ENCODE measurements at regions of chr2 and their contacts with region 1.

Region 1: DNA sequence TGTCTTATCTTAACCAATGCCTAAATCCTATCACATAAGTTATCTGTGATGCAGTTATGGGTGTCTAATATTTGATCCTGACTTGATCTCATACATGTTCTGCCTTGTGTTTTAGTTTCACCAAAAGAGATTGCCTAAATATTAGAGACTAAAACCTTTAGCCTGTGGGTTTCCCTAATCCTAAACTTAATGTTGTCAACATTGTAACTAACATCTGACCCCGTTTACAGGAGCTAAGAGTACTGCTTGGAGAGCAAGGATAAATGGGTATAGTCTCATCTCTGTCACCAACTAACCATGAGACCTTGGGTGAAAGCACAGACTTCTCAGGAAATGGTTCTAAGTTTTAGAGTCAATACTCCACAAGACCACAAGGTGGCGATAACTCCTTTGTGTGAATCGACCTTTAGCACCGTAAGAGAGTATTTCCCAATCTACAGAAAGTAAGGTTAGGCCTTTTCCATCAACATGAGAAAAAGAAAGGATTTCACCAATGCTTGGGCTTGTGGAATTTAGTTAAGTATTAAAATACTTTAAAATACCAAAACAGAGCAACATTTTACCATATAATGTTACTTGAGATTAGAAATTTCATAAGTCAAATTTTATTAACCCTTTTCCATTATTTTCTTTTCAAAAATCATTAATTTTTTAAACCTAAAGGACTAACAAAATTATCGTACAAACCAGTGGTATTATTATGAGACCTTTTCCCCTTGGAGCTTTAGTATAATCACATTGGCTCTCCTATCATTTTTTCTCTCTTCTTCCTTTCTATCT is 60.5 kb downstream of the G6PC2 start:
- DNase-seq: no peak
- H3K4me3 ChIP-seq: no peak overlapping the region
- H3K27ac ChIP-seq: no peak overlapping the region
- H3K4me1 ChIP-seq: no peaks in the 10 kb centered on the region
- H3K27me3 ChIP-seq: no peaks in the 10 kb centered on the region
- CTCF ChIP-seq: peak; percentile 86

Region 2: DNA sequence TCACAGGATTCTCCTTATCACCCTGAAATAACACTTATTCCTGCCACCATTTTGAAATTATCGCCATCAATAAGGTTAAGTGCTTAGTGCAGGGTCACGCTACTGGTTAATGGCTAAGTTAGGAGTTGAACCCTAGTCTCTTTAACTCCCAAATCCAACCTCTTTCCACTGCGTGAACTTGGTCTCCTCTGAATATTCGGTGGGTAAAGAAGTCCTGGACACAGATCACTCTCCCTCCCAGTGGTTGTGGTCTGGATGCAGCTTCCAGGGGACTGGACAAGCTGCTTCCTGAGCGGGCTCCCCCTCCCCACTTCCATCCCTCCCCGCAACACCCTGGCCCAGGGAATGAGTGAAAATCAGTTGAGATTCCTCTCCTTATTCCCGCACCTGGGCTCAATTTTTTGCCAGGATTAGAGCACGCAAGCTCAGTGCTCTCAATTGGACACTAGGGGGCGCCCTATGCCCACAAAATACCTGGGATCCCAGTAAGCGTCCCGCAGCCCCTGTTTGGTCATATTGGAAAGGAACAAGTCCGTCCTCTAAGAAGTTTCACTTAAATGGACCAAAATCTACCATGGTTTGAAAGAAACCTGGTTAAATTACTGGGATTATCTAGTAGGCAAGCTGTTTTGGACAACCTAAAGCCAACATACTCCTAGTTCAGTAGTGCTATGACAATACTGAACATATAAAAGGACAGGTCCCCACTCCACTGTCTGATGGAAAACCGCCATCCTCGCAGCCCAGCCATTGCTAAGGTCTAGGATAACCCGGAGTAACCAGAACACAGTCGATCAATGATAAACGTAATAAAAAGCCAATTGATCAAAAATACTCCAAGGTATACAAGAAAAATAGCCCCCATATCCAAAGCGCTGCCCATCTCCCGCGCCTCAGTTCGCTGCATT is 148.1 kb after region 1 on chr2:
- intact Hi-C with region 1: loop called (anchors 10 kb)
- DNase-seq: peak; percentile 70
- H3K4me3 ChIP-seq: no peak overlapping the region
- H3K27ac ChIP-seq: no peak overlapping the region
- H3K4me1 ChIP-seq: no peaks in the 10 kb centered on the region
- H3K27me3 ChIP-seq: no peaks in the 10 kb centered on the region
- CTCF ChIP-seq: peak; percentile 89

Region 3: DNA sequence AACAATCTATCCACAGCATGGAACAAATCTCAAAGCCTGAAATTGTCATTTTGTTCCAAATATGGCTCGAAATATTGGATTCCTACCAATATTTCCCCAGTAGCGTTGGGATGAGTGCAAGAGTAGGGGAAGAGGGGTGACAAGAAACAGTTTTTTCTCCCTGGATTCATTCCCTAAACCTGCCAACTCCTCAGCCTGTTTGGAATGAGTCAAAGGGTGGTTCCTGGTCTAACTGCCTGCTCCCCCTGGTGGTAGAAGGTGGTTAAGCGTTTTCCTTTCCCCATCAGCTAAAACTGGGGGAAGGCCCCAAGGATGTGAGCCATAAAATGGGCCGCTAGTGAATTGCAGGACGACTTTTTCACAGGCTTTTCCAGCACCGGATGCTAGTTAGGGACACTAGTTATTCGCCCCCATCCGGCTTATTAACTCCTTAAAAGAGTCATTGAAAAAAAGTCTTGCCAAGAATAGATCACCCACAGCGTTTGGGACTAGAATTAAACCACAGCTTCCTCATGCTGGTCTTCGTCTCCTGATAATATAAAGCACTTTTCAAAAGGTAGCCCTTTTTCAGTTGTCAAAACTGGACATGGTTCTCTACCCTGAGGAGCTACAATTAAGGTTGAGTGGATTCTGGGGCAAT is 180.2 kb after region 1 on chr2:
- intact Hi-C with region 1: loop called (anchors 10 kb)
- DNase-seq: no peak
- H3K4me3 ChIP-seq: no peak overlapping the region
- H3K27ac ChIP-seq: no peak overlapping the region
- H3K4me1 ChIP-seq: peaks cover 17% of the 10 kb centered on the region
- H3K27me3 ChIP-seq: no peaks in the 10 kb centered on the region
- CTCF ChIP-seq: peak; percentile 83

Measured in left ventricle myocardium inferior (tissue), 1 donor.